GM10248 (cell line): ENCODE measurements at regions of chr12 and their contacts with region 1.

Region 1: DNA sequence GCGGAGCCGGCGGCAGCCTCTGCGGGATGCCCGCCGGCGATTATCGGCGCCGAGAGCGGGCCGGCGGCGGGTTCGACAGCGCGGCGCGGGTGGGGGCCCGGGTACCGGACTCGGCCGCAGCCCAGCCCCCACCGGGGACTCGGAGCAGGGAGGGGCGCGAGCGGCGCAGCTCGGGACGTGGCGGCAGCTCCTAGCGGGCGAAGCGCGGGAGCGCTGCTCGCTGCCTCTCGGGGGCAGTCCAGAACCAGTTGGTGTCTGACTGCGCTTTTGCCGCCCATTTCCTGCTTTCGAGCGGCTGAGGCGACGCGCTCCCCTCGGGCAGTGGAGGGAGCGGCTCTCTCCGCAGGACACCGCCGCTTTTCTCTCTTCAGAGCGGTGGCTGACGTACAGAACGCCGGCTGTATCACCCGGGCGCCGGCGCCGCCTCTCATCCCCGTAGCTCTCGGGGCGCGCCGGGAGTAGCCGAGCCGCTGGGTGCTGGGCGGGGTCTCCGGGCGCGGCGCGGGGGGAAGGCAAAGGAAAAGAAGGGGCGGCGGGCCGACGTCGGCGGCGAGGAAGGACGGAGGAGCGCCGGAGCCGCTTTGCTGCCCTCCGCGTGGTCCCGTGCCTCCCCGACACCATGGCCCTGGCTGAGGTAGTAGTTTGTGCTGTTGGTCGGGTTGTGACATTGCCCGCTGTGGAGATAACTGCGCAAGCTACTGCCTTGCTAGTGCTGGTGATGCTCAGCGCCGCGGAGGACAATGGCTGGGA is 136.6 kb downstream of the MON2 start:
- DNase-seq: peak; percentile 82
- CTCF ChIP-seq: peak; percentile 48

Region 2: DNA sequence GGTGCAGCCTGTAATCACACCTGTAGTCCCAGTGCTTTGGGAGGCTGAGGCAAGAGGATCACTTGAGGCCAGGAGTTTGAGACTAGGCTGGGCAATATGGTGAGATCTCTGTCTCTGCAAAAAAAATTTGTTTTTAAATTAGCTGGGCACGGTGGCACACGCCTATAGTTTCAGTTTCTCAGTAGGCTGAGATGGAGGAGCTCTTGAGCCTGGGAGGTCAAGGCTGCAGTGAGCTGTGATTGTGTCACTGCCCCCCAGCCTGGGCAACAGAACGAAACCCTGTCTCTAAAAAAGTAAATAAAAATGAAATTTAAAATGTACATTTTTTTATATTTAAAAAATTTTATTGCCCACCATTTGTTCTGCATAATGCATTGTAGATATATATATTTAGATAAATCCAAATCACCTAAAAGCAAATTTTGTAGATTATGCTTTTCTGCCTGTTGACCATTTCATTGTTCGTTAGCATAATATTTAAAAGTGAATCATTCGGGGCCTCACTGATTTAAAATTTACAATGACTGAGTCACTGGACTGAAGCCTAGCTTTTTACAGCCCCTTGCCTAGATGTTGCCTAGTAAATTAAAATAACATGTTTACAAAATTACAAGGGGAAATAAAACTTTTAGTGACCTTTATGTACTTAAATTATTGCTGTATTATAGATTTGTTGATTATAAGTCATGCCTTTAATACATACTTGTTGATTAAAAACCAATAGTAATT is 255.2 kb before region 1 on chr12:
- CTCF ChIA-PET with region 1: no interaction called
- POLR2A ChIA-PET with region 1: no interaction called
- DNase-seq: no peak
- CTCF ChIP-seq: no peak

Region 3: GRCh38 chr12:62466594-62467491 is 136.4 kb before region 1 on chr12 and contains the start of gene MON2:
- CTCF ChIA-PET with region 1: no interaction called
- POLR2A ChIA-PET with region 1: interaction called, 10 read pairs
- DNase-seq: peak; percentile 96
- CTCF ChIP-seq: no peak

Region 4: DNA sequence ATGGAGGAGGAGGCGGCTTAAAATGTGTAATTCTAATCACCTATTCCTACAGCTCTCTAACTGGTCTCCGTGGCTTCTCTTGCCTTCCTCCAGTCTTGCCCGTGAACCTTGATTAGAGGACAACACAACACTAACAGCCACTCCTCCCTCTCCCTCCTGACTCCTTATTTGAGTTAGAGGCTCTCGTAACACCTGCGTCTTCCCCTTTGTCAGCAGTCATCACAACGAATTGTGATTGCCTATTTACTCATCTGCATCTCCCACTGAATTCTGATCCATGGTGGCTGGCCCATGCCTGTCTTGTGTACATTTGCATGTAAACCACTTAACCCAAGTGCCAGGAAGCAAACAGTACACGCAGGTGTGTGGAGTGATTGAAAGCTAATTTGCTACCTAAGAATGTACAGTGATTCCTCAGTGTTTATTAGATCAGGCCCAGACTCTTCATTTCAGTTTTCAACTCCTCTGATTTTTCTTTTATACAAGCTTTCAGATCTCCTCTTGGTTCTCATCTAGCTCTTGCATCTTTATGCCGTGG is 17.9 kb after region 1 on chr12:
- CTCF ChIA-PET with region 1: interaction called, 11 read pairs
- POLR2A ChIA-PET with region 1: no interaction called
- DNase-seq: no peak
- CTCF ChIP-seq: no peak

Region 5: DNA sequence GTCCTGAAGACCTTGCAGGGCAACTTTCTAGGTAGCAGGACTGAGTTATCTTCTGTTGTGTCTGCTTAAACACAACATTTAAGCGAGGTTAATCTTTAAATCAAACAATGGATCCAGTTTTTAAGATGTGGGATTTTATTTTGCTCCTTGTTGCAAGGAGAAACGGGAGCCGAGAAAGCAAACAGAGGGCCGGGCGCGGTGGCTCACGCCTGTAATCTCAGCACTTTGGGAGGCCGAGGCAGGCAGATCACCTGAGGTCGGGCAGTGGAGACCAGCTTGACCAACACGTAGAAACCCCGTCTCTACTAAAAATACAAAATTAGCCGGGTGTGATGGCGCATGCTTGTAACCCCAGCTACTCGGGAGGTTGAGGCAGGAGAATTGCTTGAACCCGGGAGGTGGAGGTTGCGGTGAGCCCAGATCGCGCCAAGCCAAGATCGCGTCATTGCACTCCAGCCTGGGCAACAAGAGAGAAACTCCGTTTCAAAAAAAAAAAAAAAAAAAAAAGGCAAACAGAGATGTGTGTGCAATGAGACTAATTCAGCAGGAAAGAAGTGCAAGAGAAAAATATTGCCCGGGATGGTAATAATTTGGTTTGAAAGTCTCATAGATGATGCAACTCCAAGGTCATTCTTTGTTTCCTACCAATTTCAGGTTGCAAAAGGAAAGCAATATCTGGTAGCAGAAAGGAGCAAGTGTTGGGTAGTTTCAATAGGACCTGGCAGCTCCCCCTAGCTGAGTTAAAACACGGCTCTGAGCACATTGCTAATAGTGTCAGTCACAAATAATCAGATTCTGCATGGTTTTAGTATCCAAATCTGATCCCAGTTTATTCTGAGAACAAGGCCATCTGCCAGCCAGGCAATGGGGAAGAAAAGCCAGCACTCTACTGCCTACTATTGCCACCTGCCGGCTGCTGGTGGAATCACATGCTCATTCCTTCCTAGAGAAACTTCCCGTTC is 190.3 kb after region 1 on chr12:
- CTCF ChIA-PET with region 1: interaction called, 10 read pairs
- POLR2A ChIA-PET with region 1: no interaction called
- DNase-seq: peak; percentile 68
- CTCF ChIP-seq: peak; percentile 89